Heart right ventricle (tissue), 16 donors: ENCODE measurements at regions of chr6 and their contacts with region 1.

Region 1: GRCh38 chr6:1609648-1610496 is at the start of gene FOXC1:
- DNase-seq: peak; percentile 89 to 92
- ATAC-seq: peak; percentile 84 to 95 (median 89)
- H3K4me3 ChIP-seq: peak within 1 kb of the TSS; percentile 53 to 81 (median 70)
- H3K27ac ChIP-seq: peak within 1 kb of the TSS; percentile 83 to 93 (median 91)
- H3K4me1 ChIP-seq: peaks cover 0 to 73% (median 11%) of the 10 kb centered on the region in 9 donors
- H3K27me3 ChIP-seq: peaks cover 14 to 94% (median 76%) of the 10 kb centered on the region in 7 donors
- CTCF ChIP-seq: no peak
- total RNA-seq, gene FOXC1: 2.8 to 7.4 (median 4.3) TPM

Region 2: GRCh38 chr6:1485678-1486077 is 124.2 kb before region 1 on chr6:
- intact Hi-C with region 1: no loop called
- DNase-seq: no peak
- ATAC-seq: no peak
- H3K4me3 ChIP-seq: no peak overlapping the region
- H3K27ac ChIP-seq: no peak overlapping the region
- H3K4me1 ChIP-seq: no peaks in the 10 kb centered on the region
- H3K27me3 ChIP-seq: peaks cover 0 to 9% (median 0%) of the 10 kb centered on the region in 7 donors
- CTCF ChIP-seq: no peak

Region 3: GRCh38 chr6:1498491-1499113 is 111.3 kb before region 1 on chr6:
- intact Hi-C with region 1: no loop called
- DNase-seq: no peak
- ATAC-seq: no peak
- H3K4me3 ChIP-seq: no peak overlapping the region
- H3K27ac ChIP-seq: no peak overlapping the region
- H3K4me1 ChIP-seq: peaks cover 0 to 9% (median 0%) of the 10 kb centered on the region in 9 donors
- H3K27me3 ChIP-seq: peaks cover 0 to 14% (median 0%) of the 10 kb centered on the region in 7 donors
- CTCF ChIP-seq: no peak

Region 4: GRCh38 chr6:1665214-1665613 is 55.3 kb after region 1 on chr6:
- intact Hi-C with region 1: no loop called
- DNase-seq: no peak
- ATAC-seq: no peak
- H3K4me3 ChIP-seq: no peak overlapping the region
- H3K27ac ChIP-seq: no peak overlapping the region
- H3K4me1 ChIP-seq: peaks cover 0 to 8% (median 0%) of the 10 kb centered on the region in 9 donors
- H3K27me3 ChIP-seq: no peaks in the 10 kb centered on the region
- CTCF ChIP-seq: no peak

Region 5: DNA sequence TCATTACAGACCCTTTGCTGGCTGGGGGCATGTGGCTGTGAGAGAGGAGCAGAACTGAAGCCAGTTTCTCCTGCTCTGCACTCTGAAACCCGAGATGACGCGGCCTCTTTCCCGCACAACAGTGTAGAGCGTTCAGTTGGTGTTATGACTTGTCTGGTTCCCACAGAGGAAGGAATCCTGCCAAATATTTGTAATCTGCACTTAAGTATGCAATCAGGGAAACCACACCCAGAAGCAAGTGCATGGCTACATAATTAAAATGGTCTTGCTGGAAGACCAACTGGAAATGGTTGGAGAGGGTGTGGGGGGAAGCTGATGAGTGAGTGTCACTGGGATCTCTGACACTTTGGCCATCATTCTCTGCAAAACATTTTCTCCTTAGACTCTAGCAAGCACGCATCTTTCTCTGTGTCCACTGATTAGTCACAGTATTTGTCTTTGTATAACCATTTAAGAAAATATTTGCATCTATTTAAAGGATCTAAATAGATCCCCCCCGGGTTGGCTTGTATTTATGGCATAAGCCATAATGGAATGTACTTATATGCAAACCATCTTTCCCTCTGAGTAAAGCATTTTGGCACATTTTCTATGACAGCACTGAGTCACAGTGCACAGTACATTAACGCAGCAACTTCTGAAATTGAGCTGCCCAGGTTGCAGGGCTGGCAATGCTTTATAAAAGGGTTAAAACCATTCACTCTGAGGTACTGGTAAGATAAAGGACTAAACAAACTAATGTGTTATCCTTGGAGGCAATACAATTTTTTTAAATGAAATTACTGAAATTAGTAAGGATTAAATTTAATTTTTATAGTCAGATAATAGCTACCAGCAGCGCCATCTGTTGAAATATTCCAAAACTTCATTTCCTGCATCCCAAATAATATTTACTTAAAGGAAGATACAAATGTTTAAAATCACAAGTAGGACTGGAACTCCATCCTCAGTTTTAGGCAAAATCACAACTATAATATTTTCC is 76.5 kb after region 1 on chr6:
- intact Hi-C with region 1: loop called in 4 of 10 experiments (anchors 5 to 10 kb)
- DNase-seq: peak in 1 of 2 donors; percentile 36
- ATAC-seq: peak; percentile 55 to 93 (median 84)
- H3K4me3 ChIP-seq: no peak overlapping the region
- H3K27ac ChIP-seq: peak overlapping the region in 5 of 10 donors; percentile 4 to 56 (median 31)
- H3K4me1 ChIP-seq: peaks cover 0 to 20% (median 17%) of the 10 kb centered on the region in 9 donors
- H3K27me3 ChIP-seq: no peaks in the 10 kb centered on the region
- CTCF ChIP-seq: peak in 6 of 9 donors; percentile 30 to 55 (median 36)

Region 6: DNA sequence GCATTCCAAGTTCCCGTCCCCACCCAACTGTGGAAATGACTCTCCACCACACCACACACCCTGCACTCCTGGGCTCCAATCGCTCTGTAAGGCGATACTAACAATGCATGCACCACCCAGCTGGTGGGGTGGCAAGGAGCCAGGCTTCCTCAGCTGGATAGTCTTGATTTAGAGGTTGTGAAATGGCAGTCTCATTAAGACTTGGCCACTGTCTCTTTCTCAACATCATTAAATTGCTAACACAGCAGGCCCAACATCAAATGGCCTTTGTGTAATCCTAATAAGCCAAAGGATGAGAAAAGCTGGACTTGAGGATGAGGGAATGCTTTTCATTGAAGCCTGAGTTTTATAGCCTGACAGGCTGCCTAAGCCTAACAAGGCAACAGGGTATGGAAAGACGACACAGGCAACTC is 411.8 kb after region 1 on chr6:
- intact Hi-C with region 1: loop called in 1 of 10 experiments (anchors 10 kb)
- DNase-seq: peak; percentile 61 to 74
- ATAC-seq: peak; percentile 61 to 92 (median 87)
- H3K4me3 ChIP-seq: no peak overlapping the region
- H3K27ac ChIP-seq: peak overlapping the region in 2 of 10 donors; percentile 11 to 36
- H3K4me1 ChIP-seq: peaks cover 0 to 20% (median 14%) of the 10 kb centered on the region in 9 donors
- H3K27me3 ChIP-seq: no peaks in the 10 kb centered on the region
- CTCF ChIP-seq: no peak

Region 7: DNA sequence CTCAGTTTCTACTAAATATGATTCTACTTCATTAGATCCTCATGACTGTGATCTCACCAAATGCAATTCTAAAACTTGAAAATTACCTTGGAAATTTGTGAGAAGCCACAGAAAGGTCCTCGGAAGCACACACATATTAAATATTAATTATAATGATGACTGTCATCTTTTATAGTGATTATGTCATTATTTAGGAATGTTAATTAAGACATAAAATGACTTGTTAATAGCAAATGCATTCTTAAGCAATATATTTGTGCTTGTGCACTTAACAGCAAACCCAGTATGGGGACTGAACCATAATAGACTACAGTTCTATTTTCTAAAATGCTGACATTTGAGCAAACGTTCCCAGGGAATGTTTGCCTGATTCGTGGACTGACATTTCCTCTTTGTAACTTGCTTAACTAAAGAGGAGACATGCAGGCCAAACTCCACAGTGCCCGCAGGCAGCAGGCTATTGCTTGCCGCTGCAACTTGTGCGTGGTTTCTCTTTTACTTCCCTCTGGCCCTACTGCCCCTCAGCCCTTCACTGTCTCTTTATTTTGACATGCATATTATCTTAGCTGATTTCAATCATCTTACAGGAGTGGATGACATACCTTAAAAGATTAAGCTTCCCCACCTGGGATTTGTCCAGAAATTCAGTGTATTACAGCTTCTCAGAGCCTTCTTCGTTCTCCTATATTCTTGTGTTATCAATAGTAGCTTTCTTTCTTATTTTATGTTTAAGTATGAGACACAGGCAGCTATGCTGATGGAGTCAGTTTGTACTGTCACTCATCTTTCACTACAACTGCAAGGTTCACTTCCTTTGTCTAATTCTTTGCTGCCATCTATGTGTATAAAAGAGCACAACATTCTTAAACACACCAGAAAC is 494.0 kb after region 1 on chr6:
- intact Hi-C with region 1: loop called in 8 of 10 experiments (anchors 2 to 5 kb)
- DNase-seq: no peak
- ATAC-seq: peak in 7 of 8 donors; percentile 75 to 83 (median 79)
- H3K4me3 ChIP-seq: peak overlapping the region in 4 of 10 donors; percentile 5 to 26 (median 14)
- H3K27ac ChIP-seq: peak overlapping the region in 2 of 10 donors; percentile 17 to 24
- H3K4me1 ChIP-seq: peaks cover 0 to 10% (median 0%) of the 10 kb centered on the region in 9 donors
- H3K27me3 ChIP-seq: no peaks in the 10 kb centered on the region
- CTCF ChIP-seq: peak in 8 of 9 donors; percentile 30 to 77 (median 65)

Region 8: GRCh38 chr6:2196079-2196679 is 586.3 kb after region 1 on chr6:
- intact Hi-C with region 1: loop called in 4 of 10 experiments (anchors 2 to 5 kb)
- DNase-seq: peak in 1 of 2 donors; percentile 42
- ATAC-seq: peak in 7 of 8 donors; percentile 61 to 85 (median 75)
- H3K4me3 ChIP-seq: no peak overlapping the region
- H3K27ac ChIP-seq: peak overlapping the region in 1 of 10 donors; percentile 18
- H3K4me1 ChIP-seq: peaks cover 0 to 22% (median 13%) of the 10 kb centered on the region in 9 donors
- H3K27me3 ChIP-seq: no peaks in the 10 kb centered on the region
- CTCF ChIP-seq: peak; percentile 67 to 87 (median 81)

Region 9: DNA sequence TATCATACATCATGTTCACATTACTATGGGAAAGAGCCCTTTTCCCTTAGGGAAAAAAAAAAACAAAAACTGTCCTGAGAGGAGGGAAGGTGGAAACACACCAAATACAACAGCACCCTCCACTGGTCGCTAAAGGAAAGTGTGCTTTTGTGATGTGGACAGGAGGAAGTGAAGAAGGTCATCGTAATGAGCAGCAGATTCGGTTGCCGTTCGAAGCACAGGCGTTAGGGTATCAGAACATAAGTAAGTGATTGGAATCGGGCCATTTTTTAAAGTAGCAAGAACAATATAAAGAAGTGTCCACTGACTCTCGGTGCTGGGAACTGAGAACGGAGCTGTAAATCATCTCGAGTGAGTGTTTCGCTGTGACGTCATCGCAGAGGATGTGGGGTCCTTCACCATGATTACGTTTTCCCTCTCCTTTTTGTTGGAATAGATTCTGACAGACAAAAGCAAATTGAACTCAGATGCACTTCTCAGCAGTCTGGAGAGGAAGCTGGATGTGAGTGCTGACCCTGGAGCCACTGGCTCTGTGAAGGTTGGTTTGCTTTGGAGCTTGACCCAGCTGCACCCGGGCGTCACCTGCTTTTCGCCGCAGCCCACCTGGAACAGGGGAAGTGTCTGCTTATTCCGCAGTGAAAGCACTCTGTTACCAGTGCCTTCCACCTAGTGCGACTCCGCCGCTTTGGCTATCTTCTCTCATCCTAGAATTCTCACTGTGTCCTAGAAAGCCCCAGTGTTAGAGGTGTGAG is 839.1 kb after region 1 on chr6:
- intact Hi-C with region 1: loop called in 1 of 10 experiments (anchors 5 kb)
- DNase-seq: peak in 1 of 2 donors; percentile 36
- ATAC-seq: peak in 5 of 8 donors; percentile 61 to 71 (median 67)
- H3K4me3 ChIP-seq: peak overlapping the region in 5 of 10 donors; percentile 5 to 28 (median 18)
- H3K27ac ChIP-seq: no peak overlapping the region
- H3K4me1 ChIP-seq: peaks cover 0 to 19% (median 10%) of the 10 kb centered on the region in 9 donors
- H3K27me3 ChIP-seq: no peaks in the 10 kb centered on the region
- CTCF ChIP-seq: peak in 8 of 9 donors; percentile 21 to 73 (median 65)